ENCODE measurements at regions of chr4 and their contacts with region 1.

Region 1: GRCh38 chr4:145216535-145216934 is 36.1 kb upstream of the OTUD4 start:
- DNase-seq: no peak
- ATAC-seq: peak in 1 of 8 donors; percentile 38
- H3K4me3 ChIP-seq: no peak overlapping the region
- H3K27ac ChIP-seq: no peak overlapping the region
- H3K4me1 ChIP-seq: peaks cover 0 to 18% (median 5%) of the 10 kb centered on the region in 9 donors
- H3K27me3 ChIP-seq: no peaks in the 10 kb centered on the region
- CTCF ChIP-seq: peak in 8 of 9 donors; percentile 29 to 67 (median 56)

Region 2: GRCh38 chr4:145352438-145353145 is 136.1 kb after region 1 on chr4:
- intact Hi-C with region 1: no loop called
- DNase-seq: no peak
- ATAC-seq: no peak
- H3K4me3 ChIP-seq: no peak overlapping the region
- H3K27ac ChIP-seq: no peak overlapping the region
- H3K4me1 ChIP-seq: no peaks in the 10 kb centered on the region
- H3K27me3 ChIP-seq: no peaks in the 10 kb centered on the region
- CTCF ChIP-seq: no peak

Region 3: DNA sequence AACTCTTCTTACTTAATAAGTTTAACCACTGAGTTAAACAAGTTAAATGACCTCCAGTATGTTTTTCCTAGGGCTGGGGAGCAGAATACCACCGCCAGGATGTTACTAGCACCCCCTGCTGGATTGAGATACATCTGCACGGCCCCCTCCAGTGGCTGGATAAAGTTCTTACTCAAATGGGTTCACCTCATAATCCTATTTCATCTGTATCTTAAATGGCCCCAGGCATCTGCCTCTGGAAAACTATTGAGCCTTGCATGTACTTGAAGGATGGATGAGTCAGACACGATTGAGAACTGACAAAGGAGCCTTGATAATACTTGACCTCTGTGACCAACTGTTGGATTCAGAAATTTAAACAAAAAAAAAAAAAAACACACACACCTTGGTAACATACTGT is 341.2 kb after region 1 on chr4:
- intact Hi-C with region 1: loop called in 1 of 10 experiments (anchors 5 kb)
- DNase-seq: peak; percentile 18 to 66
- ATAC-seq: peak; percentile 78 to 92 (median 84)
- H3K4me3 ChIP-seq: no peak overlapping the region
- H3K27ac ChIP-seq: no peak overlapping the region
- H3K4me1 ChIP-seq: peaks cover 0 to 3% (median 0%) of the 10 kb centered on the region in 9 donors
- H3K27me3 ChIP-seq: no peaks in the 10 kb centered on the region
- CTCF ChIP-seq: peak; percentile 72 to 95 (median 87)

Region 4: GRCh38 chr4:145609481-145610427 is 393.2 kb after region 1 on chr4:
- intact Hi-C with region 1: loop called in 4 of 10 experiments (anchors 5 kb)
- DNase-seq: peak in 1 of 2 donors; percentile 47
- ATAC-seq: peak in 5 of 8 donors; percentile 37 to 61 (median 55)
- H3K4me3 ChIP-seq: no peak overlapping the region
- H3K27ac ChIP-seq: peak overlapping the region in 1 of 10 donors; percentile 23
- H3K4me1 ChIP-seq: peaks cover 0 to 8% (median 0%) of the 10 kb centered on the region in 9 donors
- H3K27me3 ChIP-seq: no peaks in the 10 kb centered on the region
- CTCF ChIP-seq: peak; percentile 60 to 87 (median 74)

Measured in heart right ventricle (tissue), 16 donors.